Mammary epithelial cell (primary cell): ENCODE measurements at regions of chr2 and their contacts with region 1.

Region 1: DNA sequence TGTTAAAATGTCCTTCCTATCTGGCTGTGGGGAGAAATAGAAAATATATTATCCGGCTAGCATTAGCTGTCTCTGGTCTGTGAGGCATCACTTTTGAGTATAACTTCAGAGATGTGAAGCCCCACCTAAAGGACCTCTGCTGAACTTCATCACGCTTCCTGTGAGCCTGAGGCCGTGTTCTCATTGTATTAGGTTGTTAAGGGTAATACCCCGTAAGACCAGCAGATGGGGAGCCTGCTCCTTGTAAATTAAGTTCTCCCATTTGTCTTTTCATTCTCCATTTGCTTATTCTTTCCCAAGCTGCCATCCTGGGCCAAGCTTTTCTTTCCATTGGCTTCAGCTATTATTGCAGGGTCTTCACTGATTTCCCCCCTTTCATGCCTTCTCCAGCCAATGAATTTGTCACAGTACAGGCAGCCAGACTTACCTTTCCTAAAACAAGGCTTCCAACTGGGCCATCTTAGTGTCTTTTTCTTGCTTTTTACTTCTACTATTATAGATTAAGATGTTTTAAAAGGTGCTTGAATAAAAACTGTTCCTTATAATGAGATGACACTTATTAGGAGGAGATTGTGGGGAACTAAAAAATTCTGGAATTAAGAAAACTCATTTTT is 12.4 kb downstream of the NIF3L1 start:
- DNase-seq: peak; percentile 80
- H3K4me3 ChIP-seq: no peak overlapping the region
- H3K27ac ChIP-seq: no peak overlapping the region
- H3K4me1 ChIP-seq: no peaks in the 10 kb centered on the region
- H3K27me3 ChIP-seq: no peaks in the 10 kb centered on the region
- CTCF ChIP-seq: peak; percentile 73 to 84

Region 2: GRCh38 chr2:200845669-200846325 is 55.8 kb before region 1 on chr2:
- CTCF ChIA-PET with region 1: no interaction called
- dilution Hi-C with region 1: loop called (anchors 5 kb)
- in situ Hi-C with region 1: no loop called
- intact Hi-C with region 1: no loop called
- DNase-seq: peak; percentile 31
- H3K4me3 ChIP-seq: no peak overlapping the region
- H3K27ac ChIP-seq: no peak overlapping the region
- H3K4me1 ChIP-seq: no peaks in the 10 kb centered on the region
- H3K27me3 ChIP-seq: no peaks in the 10 kb centered on the region
- CTCF ChIP-seq: no peak

Region 3: GRCh38 chr2:200929334-200930249 is 28.0 kb after region 1 on chr2:
- CTCF ChIA-PET with region 1: no interaction called
- dilution Hi-C with region 1: no loop called
- in situ Hi-C with region 1: no loop called
- intact Hi-C with region 1: no loop called
- DNase-seq: peak; percentile 17
- H3K4me3 ChIP-seq: no peak overlapping the region
- H3K27ac ChIP-seq: no peak overlapping the region
- H3K4me1 ChIP-seq: no peaks in the 10 kb centered on the region
- H3K27me3 ChIP-seq: no peaks in the 10 kb centered on the region
- CTCF ChIP-seq: no peak

Region 4: GRCh38 chr2:201071479-201072200 is 170.1 kb after region 1 on chr2 and contains the starts of genes HYCC2 and NDUFB3:
- CTCF ChIA-PET with region 1: interaction called, 7 read pairs
- dilution Hi-C with region 1: no loop called
- in situ Hi-C with region 1: loop called in 1 of 2 experiments (anchors 10 kb)
- intact Hi-C with region 1: loop called (anchors 1 kb)
- DNase-seq: peak; percentile 93
- H3K4me3 ChIP-seq: peak within 1 kb of the TSS; percentile 84 to 90 (median 87)
- H3K27ac ChIP-seq: peak within 1 kb of the TSS; percentile 93
- H3K4me1 ChIP-seq: peaks cover 12% of the 10 kb centered on the region
- H3K27me3 ChIP-seq: no peaks in the 10 kb centered on the region
- CTCF ChIP-seq: peak in 1 of 2 donors; percentile 49
- total RNA-seq, gene HYCC2: 15.0 to 15.2 TPM
- total RNA-seq, gene NDUFB3: 23.7 to 84.9 TPM

Region 5: DNA sequence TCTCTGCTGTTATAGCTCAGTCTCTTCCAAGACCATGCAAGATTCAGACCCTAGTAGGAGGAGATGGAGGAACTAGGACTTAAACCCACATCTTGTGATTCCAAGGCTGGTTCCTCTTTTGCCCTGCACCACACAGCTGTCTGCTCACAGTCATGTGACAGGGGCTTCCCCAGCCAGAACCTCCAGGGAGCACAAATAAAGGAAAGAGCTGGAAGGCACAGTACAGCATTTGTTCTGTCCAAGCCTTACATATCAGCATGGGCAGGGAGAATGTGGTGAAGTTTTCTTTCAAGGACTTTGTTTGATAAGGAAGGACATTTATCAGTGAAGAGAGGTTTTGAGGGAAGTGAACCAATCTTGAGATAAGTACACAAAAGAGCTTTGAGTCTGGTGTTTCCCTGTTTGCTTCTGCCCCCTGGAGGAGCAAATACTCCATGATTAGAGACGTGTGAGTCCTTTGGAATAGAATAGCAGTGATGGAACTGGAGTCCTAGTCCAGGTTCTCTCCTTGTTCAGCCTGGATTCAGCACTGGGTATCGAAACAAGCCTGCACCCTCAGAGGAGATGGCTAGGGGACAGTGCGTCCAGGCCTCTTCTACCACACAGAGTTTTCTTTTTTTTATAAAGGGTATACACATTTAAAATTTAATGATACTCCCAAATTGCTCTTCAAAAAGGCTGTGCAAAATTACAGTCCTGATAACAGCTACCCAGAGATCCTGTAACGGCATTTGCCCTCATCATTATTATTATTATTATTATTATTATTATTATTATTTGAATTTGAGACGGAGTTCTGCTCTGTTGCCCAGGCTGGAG is 256.8 kb after region 1 on chr2:
- CTCF ChIA-PET with region 1: no interaction called
- dilution Hi-C with region 1: no loop called
- in situ Hi-C with region 1: no loop called
- intact Hi-C with region 1: loop called (anchors 5 kb)
- DNase-seq: peak; percentile 76
- H3K4me3 ChIP-seq: no peak overlapping the region
- H3K27ac ChIP-seq: peak overlapping the region; percentile 81
- H3K4me1 ChIP-seq: peaks cover 14% of the 10 kb centered on the region
- H3K27me3 ChIP-seq: no peaks in the 10 kb centered on the region
- CTCF ChIP-seq: peak; percentile 70 to 79

Region 6: DNA sequence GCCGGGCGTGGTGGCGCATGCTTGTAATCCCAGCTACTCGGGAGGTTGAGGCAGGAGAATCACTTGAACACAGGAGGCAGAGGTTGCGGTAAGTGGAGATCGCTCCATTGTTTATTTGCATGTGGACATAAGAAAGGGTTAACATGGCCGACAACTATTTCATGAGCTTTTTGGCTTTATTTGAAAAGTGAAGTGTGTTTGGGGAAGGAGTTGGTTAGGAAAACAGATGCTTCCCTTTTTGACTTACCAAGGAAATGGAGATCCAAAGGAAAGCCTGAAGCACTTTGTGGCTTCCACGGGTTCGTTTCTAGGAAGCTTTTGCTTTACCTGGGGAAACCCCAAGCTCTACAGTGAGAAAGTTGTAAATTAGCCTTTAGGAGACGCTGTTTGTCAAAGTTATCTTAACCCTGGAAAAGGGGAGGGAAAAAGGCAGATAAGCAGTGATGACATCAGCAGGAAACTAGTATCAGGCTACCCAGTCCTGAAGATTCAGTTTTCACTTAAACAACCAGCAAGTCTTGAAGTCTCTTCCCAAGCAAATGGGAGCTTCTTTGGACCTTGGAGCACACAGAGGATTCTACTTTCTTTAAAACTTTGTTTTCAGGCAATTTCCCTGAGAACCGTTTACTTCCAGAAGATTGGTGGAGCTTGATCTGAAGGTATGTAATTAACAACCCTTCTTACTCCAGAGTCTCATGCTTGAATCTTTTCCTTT is 281.2 kb after region 1 on chr2 and contains the start of gene CASP10:
- CTCF ChIA-PET with region 1: no interaction called
- dilution Hi-C with region 1: loop called (anchors 5 kb)
- in situ Hi-C with region 1: loop called (anchors 10 kb)
- intact Hi-C with region 1: no loop called
- DNase-seq: peak; percentile 82
- H3K4me3 ChIP-seq: peak within 1 kb of the TSS; percentile 42 to 52 (median 45)
- H3K27ac ChIP-seq: peak within 1 kb of the TSS; percentile 56
- H3K4me1 ChIP-seq: peaks cover 5% of the 10 kb centered on the region
- H3K27me3 ChIP-seq: no peaks in the 10 kb centered on the region
- CTCF ChIP-seq: peak; percentile 54 to 62
- total RNA-seq, gene CASP10: 4.5 to 5.7 TPM

Region 7: GRCh38 chr2:201642579-201643215 is 741.1 kb after region 1 on chr2:
- CTCF ChIA-PET with region 1: no interaction called
- dilution Hi-C with region 1: loop called (anchors 25 kb)
- in situ Hi-C with region 1: no loop called
- intact Hi-C with region 1: no loop called
- DNase-seq: peak; percentile 81
- H3K4me3 ChIP-seq: peak overlapping the region; percentile 65 to 97 (median 69)
- H3K27ac ChIP-seq: peak overlapping the region; percentile 74
- H3K4me1 ChIP-seq: peaks cover 19% of the 10 kb centered on the region
- H3K27me3 ChIP-seq: no peaks in the 10 kb centered on the region
- CTCF ChIP-seq: no peak